Activated naive CD4-positive, alpha-beta T cell treated with anti-CD3 and anti-CD28 coated beads for 36 hours (primary cell): ENCODE measurements at regions of chr20 and their contacts with region 1.

Region 1: GRCh38 chr20:884983-885952 is 30.9 kb downstream of the ANGPT4 start:
- DNase-seq: peak; percentile 32
- H3K4me3 Mint-ChIP-seq: no peak overlapping the region
- H3K27ac Mint-ChIP-seq: no peak overlapping the region
- H3K4me1 Mint-ChIP-seq: peaks cover 13% of the 10 kb centered on the region
- H3K27me3 Mint-ChIP-seq: peaks cover 14% of the 10 kb centered on the region

Region 2: DNA sequence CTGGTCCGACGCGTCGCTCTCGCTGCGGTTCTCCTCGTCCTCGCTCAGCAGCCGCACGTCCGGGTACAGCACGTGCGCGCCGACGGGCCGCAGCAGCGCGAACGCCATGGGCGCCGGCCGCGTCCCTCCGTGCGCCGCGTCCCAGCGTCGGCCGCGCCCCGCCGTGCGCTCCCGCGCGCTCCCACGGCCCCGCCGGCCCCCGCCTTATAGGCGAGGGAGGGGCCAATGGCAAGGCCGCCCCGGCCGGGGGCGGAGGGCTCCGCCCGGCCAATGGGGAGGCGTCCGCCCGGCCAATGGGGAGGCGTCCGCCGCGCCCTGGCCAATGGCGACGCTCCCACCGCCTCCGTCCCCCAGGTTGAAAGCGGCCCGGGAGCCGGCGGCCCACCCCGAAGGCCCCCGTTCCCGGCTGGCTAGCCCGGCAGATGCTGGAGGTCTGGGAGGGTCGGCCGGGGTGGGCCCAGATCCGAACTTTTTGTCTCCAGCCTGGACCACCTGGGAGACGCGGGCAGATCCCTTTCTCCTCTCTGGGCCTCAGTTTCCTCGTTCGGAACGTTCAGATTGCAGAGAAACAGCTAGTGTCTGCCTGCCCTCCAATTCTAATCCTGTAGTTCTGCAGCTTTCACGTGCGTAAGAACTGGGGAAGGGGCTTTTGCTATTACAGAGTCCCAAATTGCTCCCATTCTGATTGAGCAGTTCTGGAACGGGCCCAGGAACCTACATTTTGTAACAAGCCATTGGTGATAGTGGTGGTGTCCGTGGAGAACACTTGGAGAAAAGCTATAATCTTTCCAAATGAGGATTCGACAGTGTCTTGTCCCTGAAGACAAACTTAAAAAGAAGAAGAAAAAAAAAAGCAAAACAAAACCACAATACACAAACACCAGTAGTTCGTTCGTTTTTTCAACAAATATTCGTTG is 274.9 kb before region 1 on chr20 and contains the start of gene TCF15:
- CTCF ChIA-PET with region 1: no interaction called
- intact Hi-C with region 1: no loop called
- DNase-seq: no peak
- H3K4me3 Mint-ChIP-seq: peak within 1 kb of the TSS; percentile 21
- H3K27ac Mint-ChIP-seq: no peak within 1 kb of the TSS
- H3K4me1 Mint-ChIP-seq: peaks cover 11% of the 10 kb centered on the region
- H3K27me3 Mint-ChIP-seq: peaks cover 51% of the 10 kb centered on the region
- total RNA-seq, gene TCF15: not detected

Region 3: GRCh38 chr20:856361-857040 is 28.8 kb before region 1 on chr20:
- CTCF ChIA-PET with region 1: no interaction called
- intact Hi-C with region 1: loop called (anchors 2 kb)
- DNase-seq: peak; percentile 64
- H3K4me3 Mint-ChIP-seq: no peak overlapping the region
- H3K27ac Mint-ChIP-seq: no peak overlapping the region
- H3K4me1 Mint-ChIP-seq: peaks cover 58% of the 10 kb centered on the region
- H3K27me3 Mint-ChIP-seq: no peaks in the 10 kb centered on the region

Region 4: DNA sequence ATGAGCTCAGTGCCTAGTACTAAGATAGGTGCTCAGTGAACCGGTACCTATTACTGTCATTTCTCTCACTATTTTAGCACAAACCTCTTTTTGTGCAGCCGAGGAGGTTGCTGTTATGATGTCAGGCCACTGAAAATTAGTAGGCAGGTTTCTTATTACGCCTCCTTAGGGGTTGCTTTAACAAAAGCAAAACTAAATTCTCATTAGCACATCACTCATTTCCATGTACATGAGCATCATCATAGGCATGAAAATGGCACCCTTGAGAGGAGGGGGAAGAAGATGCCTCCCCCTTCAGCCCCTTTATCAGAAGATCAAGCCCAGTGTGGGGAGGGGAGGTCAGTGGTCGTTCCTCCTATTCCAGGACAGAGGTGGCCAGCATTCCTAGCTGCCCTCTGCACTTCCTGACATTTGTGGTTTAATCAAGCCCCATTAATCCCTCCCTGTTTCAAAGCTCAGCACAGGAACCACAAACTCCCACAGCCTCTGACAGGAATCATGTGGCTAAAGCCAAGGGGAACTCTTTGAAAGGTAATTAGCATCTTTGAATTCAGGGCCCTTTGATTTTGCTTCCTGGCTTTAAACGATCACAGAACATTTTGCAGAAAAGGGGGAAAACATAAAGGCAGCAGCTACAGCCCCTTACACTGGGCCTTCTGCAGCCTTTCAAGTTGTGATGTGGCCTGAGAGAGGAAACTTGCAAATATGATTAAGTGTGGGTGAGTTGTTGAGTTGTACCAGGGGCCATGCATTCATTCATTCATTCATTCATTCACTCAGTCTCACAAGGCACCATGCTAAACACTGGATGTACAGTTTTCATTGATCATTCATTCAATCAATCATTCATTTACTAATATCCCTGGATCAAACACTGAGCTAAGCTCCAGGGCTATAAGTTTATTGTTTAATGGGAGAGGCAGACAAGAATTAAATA is 201.3 kb after region 1 on chr20:
- CTCF ChIA-PET with region 1: no interaction called
- intact Hi-C with region 1: no loop called
- DNase-seq: peak; percentile 51
- H3K4me3 Mint-ChIP-seq: no peak overlapping the region
- H3K27ac Mint-ChIP-seq: peak overlapping the region; percentile 87
- H3K4me1 Mint-ChIP-seq: peaks cover 32% of the 10 kb centered on the region
- H3K27me3 Mint-ChIP-seq: no peaks in the 10 kb centered on the region